ENCODE measurements at regions of chr7 and their contacts with region 1.

Region 1: GRCh38 chr7:149021725-149022062 is 6.6 kb downstream of the PDIA4 start:
- DNase-seq: no peak
- H3K4me3 Mint-ChIP-seq: no peak overlapping the region
- H3K27ac Mint-ChIP-seq: no peak overlapping the region
- H3K4me1 Mint-ChIP-seq: peaks cover 27% of the 10 kb centered on the region
- H3K27me3 Mint-ChIP-seq: no peaks in the 10 kb centered on the region

Region 2: GRCh38 chr7:148385009-148385682 is 636.5 kb before region 1 on chr7:
- CTCF ChIA-PET with region 1: no interaction called
- POLR2A ChIA-PET with region 1: no interaction called
- intact Hi-C with region 1: no loop called
- DNase-seq: no peak
- H3K4me3 Mint-ChIP-seq: no peak overlapping the region
- H3K27ac Mint-ChIP-seq: no peak overlapping the region
- H3K4me1 Mint-ChIP-seq: no peaks in the 10 kb centered on the region
- H3K27me3 Mint-ChIP-seq: no peaks in the 10 kb centered on the region

Region 3: GRCh38 chr7:149050941-149051340 is 29.2 kb after region 1 on chr7:
- CTCF ChIA-PET with region 1: no interaction called
- POLR2A ChIA-PET with region 1: no interaction called
- intact Hi-C with region 1: loop called (anchors 1 kb)
- DNase-seq: no peak
- H3K4me3 Mint-ChIP-seq: no peak overlapping the region
- H3K27ac Mint-ChIP-seq: no peak overlapping the region
- H3K4me1 Mint-ChIP-seq: no peaks in the 10 kb centered on the region
- H3K27me3 Mint-ChIP-seq: peaks cover 2% of the 10 kb centered on the region